Mammary epithelial cell (primary cell): ENCODE measurements at regions of chr1 and their contacts with region 1.

Region 1: GRCh38 chr1:25111706-25112105 is 120.6 kb downstream of the SYF2 start:
- DNase-seq: peak; percentile 41
- H3K4me3 ChIP-seq: no peak overlapping the region
- H3K27ac ChIP-seq: no peak overlapping the region
- H3K4me1 ChIP-seq: no peaks in the 10 kb centered on the region
- H3K27me3 ChIP-seq: peaks cover 4% of the 10 kb centered on the region
- CTCF ChIP-seq: no peak

Region 2: DNA sequence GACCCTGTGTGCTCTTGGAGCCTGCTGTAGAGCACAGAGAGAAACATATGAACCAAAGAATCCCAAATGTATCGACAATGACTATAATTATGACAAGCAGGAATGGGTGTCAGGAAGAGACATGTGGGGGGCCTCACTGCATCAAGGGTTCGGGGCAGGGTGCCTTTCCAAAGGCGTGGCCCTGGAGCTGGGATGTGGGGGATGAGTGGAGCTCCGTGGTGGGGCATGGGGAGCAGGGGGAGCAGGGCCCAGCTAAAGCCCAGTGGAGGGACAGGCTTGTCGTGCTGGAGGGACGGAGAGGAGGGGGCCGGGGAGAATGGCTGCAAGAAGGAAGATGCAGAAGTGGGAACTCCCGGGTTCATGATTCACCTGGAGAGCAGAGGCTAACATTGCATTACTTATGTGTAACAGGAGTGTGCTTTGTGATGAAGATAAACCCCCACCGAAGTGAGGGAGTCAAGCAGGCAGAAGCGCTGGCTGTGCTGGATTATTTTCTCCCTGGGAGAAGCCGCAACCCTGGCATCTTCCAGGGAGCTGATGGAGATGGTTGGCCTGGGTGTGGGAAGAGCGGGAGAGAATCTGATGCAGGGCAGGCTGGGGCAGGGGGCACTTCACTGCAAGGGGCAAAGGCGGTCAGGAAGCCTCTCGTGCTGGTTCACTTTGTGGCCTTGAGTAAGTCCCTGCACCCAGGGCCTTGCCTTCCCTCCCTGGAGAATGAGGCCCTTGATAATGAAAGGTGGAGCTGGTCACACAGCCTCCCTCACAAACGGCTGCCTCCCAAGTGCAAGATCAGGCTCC is 57.0 kb before region 1 on chr1:
- CTCF ChIA-PET with region 1: no interaction called
- dilution Hi-C with region 1: loop called (anchors 5 kb)
- in situ Hi-C with region 1: no loop called
- intact Hi-C with region 1: no loop called
- DNase-seq: no peak
- H3K4me3 ChIP-seq: no peak overlapping the region
- H3K27ac ChIP-seq: no peak overlapping the region
- H3K4me1 ChIP-seq: peaks cover 4% of the 10 kb centered on the region
- H3K27me3 ChIP-seq: no peaks in the 10 kb centered on the region
- CTCF ChIP-seq: no peak

Region 3: DNA sequence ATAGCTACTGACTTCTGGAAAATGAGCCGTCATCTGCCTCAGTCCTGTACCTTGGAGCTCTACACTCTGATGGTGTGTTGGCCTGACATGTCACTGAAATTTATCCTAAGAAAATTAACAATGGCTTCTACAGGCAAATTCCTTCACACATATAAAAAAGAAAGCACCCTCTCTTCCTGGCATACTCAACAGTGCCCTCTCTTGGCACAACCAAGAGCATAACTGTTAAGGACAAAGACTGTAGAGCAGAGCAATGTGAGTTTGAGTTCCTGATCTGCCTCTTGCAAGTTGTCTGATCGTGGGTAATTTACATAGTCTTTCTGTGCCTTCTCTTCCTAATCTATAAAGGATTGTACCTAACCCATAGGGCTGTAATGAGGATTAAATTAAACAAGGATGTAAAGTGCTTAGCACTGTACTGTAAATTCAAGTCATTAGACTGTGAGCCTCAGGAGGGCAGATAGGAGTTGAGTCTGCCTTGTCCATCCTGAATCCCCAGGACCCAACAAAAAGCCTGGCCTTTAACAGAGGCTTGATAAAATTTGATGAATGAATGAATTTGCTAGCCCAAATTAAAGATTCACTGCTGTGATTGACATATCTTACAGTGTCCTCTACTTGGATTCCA is 37.1 kb after region 1 on chr1:
- CTCF ChIA-PET with region 1: no interaction called
- dilution Hi-C with region 1: no loop called
- in situ Hi-C with region 1: no loop called
- intact Hi-C with region 1: no loop called
- DNase-seq: peak; percentile 24
- H3K4me3 ChIP-seq: no peak overlapping the region
- H3K27ac ChIP-seq: no peak overlapping the region
- H3K4me1 ChIP-seq: peaks cover 8% of the 10 kb centered on the region
- H3K27me3 ChIP-seq: no peaks in the 10 kb centered on the region
- CTCF ChIP-seq: peak; percentile 42 to 63

Region 4: GRCh38 chr1:25182629-25183028 is 70.9 kb after region 1 on chr1:
- CTCF ChIA-PET with region 1: no interaction called
- dilution Hi-C with region 1: no loop called
- in situ Hi-C with region 1: no loop called
- intact Hi-C with region 1: no loop called
- DNase-seq: peak; percentile 83
- H3K4me3 ChIP-seq: no peak overlapping the region
- H3K27ac ChIP-seq: no peak overlapping the region
- H3K4me1 ChIP-seq: peaks cover 11% of the 10 kb centered on the region
- H3K27me3 ChIP-seq: no peaks in the 10 kb centered on the region
- CTCF ChIP-seq: no peak

Region 5: DNA sequence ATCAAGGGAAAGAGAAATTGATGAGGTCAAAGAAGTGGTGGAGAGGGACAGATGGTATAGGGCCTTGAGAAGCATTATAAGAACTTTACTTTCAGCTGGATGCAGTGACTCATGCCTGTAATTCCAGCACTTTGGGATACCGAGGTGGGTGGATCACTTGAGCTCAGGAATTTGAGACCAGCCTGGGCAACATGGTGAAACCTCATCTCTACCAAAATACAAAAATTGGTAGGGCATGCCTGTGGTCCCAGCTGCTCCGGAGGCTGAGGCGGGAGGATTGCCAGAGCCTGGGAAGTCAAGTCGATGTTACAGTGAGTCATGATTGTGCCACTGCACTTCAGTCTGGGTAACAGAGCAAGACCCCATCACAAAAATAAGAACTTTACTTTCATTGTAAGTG is 232.2 kb after region 1 on chr1:
- CTCF ChIA-PET with region 1: no interaction called
- dilution Hi-C with region 1: no loop called
- in situ Hi-C with region 1: no loop called
- intact Hi-C with region 1: no loop called
- DNase-seq: peak; percentile 61
- H3K4me3 ChIP-seq: no peak overlapping the region
- H3K27ac ChIP-seq: peak overlapping the region; percentile 13
- H3K4me1 ChIP-seq: peaks cover 25% of the 10 kb centered on the region
- H3K27me3 ChIP-seq: no peaks in the 10 kb centered on the region
- CTCF ChIP-seq: no peak